ENCODE measurements at regions of chr3 and their contacts with region 1.

Region 1: DNA sequence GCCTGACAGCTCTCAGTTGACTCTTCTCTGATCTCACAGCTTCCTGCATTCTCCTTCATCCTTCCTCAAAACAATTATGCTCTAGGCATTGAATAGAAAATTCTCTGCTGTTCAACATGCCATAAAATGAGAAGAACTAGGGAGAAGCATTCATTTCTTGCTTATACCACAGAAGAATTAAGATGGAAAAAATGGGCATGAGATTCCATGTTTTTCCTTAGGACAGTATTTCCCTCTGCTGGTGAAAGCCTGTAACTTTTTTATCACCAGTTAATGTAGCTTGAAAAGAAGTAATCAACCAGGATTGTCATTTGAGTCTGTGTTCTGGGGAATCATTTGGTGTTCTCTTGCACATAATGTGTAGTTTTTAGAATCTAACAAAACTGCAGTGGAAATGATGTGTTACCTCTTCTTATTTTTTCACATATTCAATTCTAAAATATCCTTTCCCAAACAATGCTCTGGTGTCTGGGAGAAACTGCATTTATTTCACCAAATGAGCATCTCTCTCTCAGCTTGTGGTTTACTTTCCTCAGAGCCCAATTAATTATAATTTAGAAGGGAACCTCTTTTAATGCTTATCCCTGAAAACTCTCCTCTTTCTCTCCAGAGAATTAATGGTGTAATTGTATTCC is 92.8 kb upstream of the DCBLD2 start:
- DNase-seq: no peak
- H3K4me3 ChIP-seq: no peak overlapping the region
- CTCF ChIP-seq: peak; percentile 30

Region 2: GRCh38 chr3:98593046-98593936 is 401.0 kb before region 1 on chr3 and contains the start of gene CPOX:
- CTCF ChIA-PET with region 1: interaction called, 37 read pairs
- POLR2A ChIA-PET with region 1: no interaction called
- DNase-seq: peak; percentile 45
- H3K4me3 ChIP-seq: peak within 1 kb of the TSS; percentile 83
- CTCF ChIP-seq: no peak

Region 3: DNA sequence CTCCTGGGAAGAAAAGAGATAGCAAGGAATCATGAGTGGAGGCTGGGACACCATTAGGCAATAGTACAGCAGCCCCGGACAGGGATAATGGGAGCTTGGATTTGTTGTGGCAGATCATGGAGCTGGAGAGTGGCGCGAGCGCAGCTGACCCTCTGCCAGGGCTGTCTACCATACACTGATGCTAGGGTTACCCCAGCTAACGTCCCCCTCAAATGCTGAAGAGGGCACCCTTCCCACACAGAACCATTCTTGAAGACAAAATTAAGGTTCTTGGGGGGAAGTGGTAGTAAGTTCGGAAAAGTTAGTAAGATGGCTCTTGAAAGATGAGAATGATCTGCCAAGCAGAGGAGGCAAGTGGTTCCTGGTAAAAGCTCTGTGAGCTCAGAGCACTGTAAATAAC is 170.0 kb before region 1 on chr3:
- CTCF ChIA-PET with region 1: interaction called, 128 read pairs
- POLR2A ChIA-PET with region 1: no interaction called
- DNase-seq: no peak
- H3K4me3 ChIP-seq: no peak overlapping the region
- CTCF ChIP-seq: no peak

Region 4: DNA sequence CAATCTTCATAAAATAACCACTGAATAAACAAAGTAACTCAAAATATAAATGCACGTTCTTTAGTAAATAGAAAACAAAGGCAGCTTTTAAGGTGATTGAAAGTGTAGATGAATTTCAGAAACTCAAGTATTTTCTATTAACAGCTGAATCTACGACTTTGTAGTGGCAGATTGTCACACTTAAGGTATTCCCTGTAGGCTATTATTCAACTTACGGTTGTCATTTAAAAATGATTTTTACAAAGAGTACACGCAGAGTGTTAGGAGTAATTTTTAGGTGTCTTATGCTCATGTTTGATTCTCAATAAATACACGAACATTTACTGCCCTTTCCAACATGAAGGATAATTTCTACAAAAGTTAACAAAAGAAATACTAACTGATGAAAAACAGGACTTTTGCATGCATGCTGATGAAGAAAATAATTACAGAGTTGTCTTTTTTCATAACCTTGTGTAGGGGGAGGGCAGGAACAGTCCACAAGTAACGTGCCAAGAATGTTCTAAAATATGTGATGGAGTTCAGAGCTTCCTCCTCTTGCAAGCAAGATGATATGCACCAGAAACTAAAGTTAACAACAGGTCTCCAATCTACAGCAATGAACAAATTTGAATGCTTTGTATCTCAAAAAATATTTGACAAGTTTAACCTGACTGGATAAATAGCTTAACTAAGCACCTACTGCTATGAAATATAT is 109.4 kb before region 1 on chr3:
- CTCF ChIA-PET with region 1: interaction called, 12 read pairs
- POLR2A ChIA-PET with region 1: no interaction called
- DNase-seq: no peak
- H3K4me3 ChIP-seq: no peak overlapping the region
- CTCF ChIP-seq: no peak

Region 5: DNA sequence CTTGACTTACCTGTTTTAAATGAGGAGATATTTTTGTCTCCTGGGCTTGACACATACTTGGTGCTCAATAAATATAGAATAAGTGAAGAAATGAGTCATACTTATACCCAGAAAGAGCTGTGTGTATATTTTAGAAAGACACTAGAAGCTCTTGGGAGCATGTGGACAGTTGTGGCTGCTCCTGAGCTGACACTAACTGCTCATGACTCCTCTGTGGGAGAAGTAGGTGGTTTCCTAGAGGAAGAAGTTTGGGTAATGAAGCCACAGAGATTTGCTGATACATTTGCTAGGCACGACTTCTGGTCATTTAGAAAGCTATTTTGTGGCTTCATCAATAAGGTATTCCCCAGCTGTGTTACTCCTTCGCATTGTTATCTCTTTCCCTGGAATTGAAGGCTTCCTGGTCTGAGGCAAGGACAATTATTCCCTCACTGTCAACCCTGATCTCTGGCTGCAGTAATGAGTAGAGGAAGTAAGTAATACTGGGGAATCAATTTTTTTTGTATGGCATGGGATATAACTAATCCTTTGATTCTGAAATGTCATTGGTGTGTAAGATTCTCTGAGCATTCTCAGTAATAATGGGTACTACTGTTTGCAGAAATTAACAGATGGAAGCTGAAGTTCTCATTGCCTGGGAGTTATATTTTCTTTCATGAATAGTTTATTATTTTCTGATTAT is 13.2 kb before region 1 on chr3:
- CTCF ChIA-PET with region 1: interaction called, 55 read pairs
- POLR2A ChIA-PET with region 1: no interaction called
- DNase-seq: no peak
- H3K4me3 ChIP-seq: no peak overlapping the region
- CTCF ChIP-seq: no peak

Region 6: GRCh38 chr3:99023590-99024192 is 29.4 kb after region 1 on chr3:
- CTCF ChIA-PET with region 1: interaction called, 11 read pairs
- POLR2A ChIA-PET with region 1: no interaction called
- DNase-seq: no peak
- H3K4me3 ChIP-seq: no peak overlapping the region
- CTCF ChIP-seq: peak; percentile 52

Measured in AG04449 (cell line).